Motor neuron (in vitro differentiated cells): ENCODE measurements at regions of chr5 and their contacts with region 1.

Region 1: DNA sequence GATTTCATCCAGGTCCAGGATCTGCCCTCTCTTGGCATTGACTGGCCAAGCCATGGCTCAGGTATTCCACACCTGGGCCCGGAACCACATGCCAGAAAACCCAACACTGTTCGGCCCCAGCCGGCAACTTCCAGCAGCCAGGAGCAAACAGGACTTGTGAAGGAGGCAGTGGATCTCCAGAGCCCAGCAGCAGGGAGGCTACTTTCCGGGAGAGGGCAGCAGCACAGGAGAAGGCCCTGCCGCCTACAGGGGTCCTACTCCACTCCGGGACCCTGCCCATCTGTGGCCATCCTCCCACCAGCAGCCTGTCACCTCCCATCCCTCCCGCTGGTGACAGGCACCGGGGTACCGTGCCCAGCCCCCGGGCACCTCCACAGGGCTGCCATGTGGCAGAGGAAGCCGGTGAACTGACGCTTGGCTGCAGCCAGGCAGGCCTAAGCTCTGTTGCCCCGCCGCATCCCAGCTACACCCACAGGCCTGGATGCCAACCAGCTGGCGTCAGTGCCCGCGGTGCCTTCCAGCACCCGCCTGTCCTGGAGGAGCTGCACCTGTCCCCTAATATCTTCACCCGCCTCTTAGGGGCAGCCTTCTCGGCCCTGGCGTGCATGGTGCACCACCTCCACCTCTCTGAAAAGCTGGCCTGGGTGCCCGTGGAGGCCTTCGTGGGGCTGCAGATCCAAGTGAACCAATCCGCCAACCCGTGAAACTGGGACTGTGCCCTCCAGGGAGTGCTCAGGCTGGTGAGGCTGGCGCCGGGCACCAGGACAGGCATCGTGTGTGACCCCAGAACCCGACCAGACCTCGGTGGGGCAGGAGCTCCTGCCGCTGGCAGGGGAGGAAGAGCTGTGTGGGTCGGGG is 18.9 kb upstream of the SLC30A5 start:
- ATAC-seq: no peak
- H3K4me3 ChIP-seq: no peak overlapping the region
- H3K27ac ChIP-seq: no peak overlapping the region
- H3K4me1 ChIP-seq: no peaks in the 10 kb centered on the region

Region 2: DNA sequence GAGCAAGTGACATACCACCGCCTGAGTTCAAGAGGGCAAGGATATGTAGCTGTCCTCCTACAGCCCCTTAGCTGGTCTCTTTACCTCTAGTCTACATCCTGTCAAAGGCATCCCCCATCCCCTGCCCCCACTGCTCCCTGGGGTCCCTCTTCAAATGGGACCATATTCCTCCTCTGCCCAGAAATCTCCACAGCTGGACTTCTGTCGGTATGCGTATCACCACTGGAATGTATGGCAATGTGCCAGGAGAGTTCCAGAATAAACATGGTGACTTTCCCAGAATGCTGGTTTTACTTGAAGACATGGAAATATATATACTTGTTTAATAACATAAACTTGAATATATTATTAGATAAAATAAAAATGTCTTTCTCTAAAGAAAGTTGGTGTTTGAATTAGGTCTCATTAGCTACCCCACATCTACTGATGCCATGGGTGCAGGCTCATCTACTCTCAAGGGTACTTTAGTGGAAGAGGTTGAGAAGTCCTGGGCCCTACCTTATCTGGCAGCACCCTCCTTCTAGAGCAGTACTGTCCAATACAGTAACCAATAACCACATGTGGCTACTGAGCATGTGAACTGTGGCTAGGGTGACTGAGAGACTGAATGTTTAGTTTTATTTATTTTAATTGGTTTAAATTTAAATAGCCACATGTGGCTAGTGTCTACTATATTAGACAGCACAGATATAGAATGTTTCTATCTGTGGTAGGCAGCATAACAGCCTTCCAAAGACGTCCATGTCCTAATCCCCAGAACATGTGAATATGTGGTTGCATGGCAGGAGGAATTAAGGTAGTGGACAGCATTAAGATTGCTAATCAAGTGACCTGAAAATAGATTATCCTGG is 162.8 kb before region 1 on chr5:
- in situ Hi-C with region 1: no loop called
- ATAC-seq: peak in 2 of 8 experiments; percentile 29 to 36
- H3K4me3 ChIP-seq: no peak overlapping the region
- H3K27ac ChIP-seq: no peak overlapping the region
- H3K4me1 ChIP-seq: no peaks in the 10 kb centered on the region

Region 3: GRCh38 chr5:69166686-69167492 is 92.0 kb after region 1 on chr5 and contains the start of gene CCNB1:
- in situ Hi-C with region 1: loop called in 1 of 9 experiments (anchors 25 kb)
- ATAC-seq: peak; percentile 99 to 100 (median 99)
- H3K4me3 ChIP-seq: peak within 1 kb of the TSS; percentile 51 to 71 (median 56)
- H3K27ac ChIP-seq: peak within 1 kb of the TSS in 1 of 2 donors; percentile 68
- H3K4me1 ChIP-seq: peaks cover 7 to 12% of the 10 kb centered on the region in 2 donors
- total RNA-seq, gene CCNB1: 6.1 to 149 (median 8.9) TPM